IMR-90 (cell line): ENCODE measurements at regions of chr13 and their contacts with region 1.

Region 1: DNA sequence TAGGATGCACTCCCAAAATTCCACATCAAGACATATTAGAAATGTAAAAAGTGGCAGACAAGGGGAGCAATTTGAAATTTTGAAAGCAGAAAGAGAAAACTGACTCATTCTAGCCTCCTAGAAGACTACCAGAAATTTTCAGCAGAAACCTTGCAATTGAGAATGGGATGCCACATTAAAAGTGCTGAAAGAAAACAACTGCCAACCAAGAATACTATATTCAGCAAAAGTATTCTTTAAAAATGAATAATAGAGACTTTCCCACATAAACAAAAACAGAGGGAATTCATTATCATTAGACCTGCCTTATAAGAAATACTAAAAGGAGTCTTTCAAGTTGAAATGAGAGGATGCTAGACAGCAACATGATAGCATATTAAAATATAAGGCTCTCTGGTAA is 78.3 kb upstream of the HTR2A start:
- DNase-seq: no peak
- ATAC-seq: no peak
- H3K4me3 ChIP-seq: no peak overlapping the region
- H3K27ac ChIP-seq: no peak overlapping the region
- H3K4me1 ChIP-seq: no peaks in the 10 kb centered on the region
- H3K27me3 ChIP-seq: no peaks in the 10 kb centered on the region
- CTCF ChIP-seq: no peak
- POLR2A ChIP-seq: no peak
- RAD21 ChIP-seq: no peak

Region 2: DNA sequence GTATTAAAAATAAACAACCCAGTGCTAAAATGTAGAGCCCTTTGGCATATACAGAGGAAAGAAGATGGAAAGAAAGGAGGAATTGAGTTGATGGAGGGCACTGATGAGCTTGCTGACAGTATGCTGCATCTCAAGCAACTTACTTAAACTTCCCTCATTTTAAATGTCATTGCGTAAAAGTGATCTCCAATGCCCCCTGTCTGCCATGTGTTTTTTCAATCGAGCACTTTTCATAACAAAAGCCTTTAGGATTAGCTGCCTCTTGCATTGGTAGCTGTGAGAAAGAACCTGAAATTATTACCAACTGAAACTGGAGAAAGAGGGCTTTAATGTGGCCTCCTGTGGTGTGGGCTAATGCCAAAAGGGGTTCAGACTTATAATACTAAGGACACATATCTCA is 484.3 kb after region 1 on chr13:
- CTCF ChIA-PET with region 1: interaction called, 5 read pairs
- POLR2A ChIA-PET with region 1: no interaction called
- dilution Hi-C with region 1: no loop called
- in situ Hi-C with region 1: no loop called
- intact Hi-C with region 1: loop called (anchors 10 kb)
- DNase-seq: peak; percentile 43
- ATAC-seq: peak; percentile 35
- H3K4me3 ChIP-seq: no peak overlapping the region
- H3K27ac ChIP-seq: no peak overlapping the region
- H3K4me1 ChIP-seq: peaks cover 4% of the 10 kb centered on the region; the same call in 1 of the 2 replicates
- H3K27me3 ChIP-seq: no peaks in the 10 kb centered on the region
- CTCF ChIP-seq: peak; percentile 43
- POLR2A ChIP-seq: no peak
- RAD21 ChIP-seq: peak; percentile 35; the same call in 1 of the 2 replicates